CD8-positive, alpha-beta memory T cell (primary cell): ENCODE measurements at regions of chr3 and their contacts with region 1.

Region 1: GRCh38 chr3:100316641-100317069 is 17.9 kb upstream of the NIT2 start:
- DNase-seq: peak in 4 of 5 donors; percentile 24 to 55 (median 42)
- H3K4me3 ChIP-seq: no peak overlapping the region
- H3K4me3 Mint-ChIP-seq: peak overlapping the region in 5 of 7 donors; percentile 18 to 72 (median 47)
- H3K27ac ChIP-seq: no peak overlapping the region
- H3K27ac Mint-ChIP-seq: peak overlapping the region in 4 of 8 donors; percentile 24 to 85 (median 55)
- H3K4me1 ChIP-seq: peaks cover 4% of the 10 kb centered on the region
- H3K4me1 Mint-ChIP-seq: peaks cover 11 to 19% (median 18%) of the 10 kb centered on the region in 3 donors
- H3K27me3 ChIP-seq: no peaks in the 10 kb centered on the region
- H3K27me3 Mint-ChIP-seq: no peaks in the 10 kb centered on the region

Region 2: DNA sequence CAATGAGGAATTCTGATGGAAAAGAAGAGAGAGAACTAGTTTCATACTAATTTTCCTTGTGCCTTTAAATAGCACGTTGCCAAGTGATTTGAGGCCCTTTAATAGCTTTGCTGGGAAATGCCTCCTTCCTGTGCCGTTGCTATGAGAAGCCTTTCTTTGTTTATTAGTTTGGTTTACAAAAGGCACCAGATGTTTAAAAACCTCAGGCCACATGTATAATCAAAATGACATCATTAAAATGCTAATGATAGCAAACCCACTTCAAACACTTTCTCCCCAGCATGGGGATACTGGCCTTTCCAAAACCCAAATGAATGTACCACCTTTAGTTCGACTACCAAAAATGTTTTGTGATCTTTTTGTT is 105.9 kb before region 1 on chr3:
- CTCF ChIA-PET with region 1: no interaction called
- POLR2A ChIA-PET with region 1: no interaction called
- DNase-seq: peak in 2 of 5 donors; percentile 10 to 51
- H3K4me3 ChIP-seq: peak overlapping the region; percentile 40
- H3K4me3 Mint-ChIP-seq: peak overlapping the region in 6 of 7 donors; percentile 52 to 80 (median 65)
- H3K27ac ChIP-seq: no peak overlapping the region
- H3K27ac Mint-ChIP-seq: peak overlapping the region in 7 of 8 donors; percentile 67 to 97 (median 77)
- H3K4me1 ChIP-seq: peaks cover 13% of the 10 kb centered on the region
- H3K4me1 Mint-ChIP-seq: peaks cover 18 to 31% (median 21%) of the 10 kb centered on the region in 3 donors
- H3K27me3 ChIP-seq: no peaks in the 10 kb centered on the region
- H3K27me3 Mint-ChIP-seq: peaks cover 3 to 5% of the 10 kb centered on the region in 2 donors

Region 3: GRCh38 chr3:100245927-100246326 is 70.7 kb before region 1 on chr3:
- CTCF ChIA-PET with region 1: no interaction called
- POLR2A ChIA-PET with region 1: no interaction called
- DNase-seq: no peak
- H3K4me3 ChIP-seq: no peak overlapping the region
- H3K4me3 Mint-ChIP-seq: no peak overlapping the region
- H3K27ac ChIP-seq: no peak overlapping the region
- H3K27ac Mint-ChIP-seq: no peak overlapping the region
- H3K4me1 ChIP-seq: no peaks in the 10 kb centered on the region
- H3K4me1 Mint-ChIP-seq: no peaks in the 10 kb centered on the region
- H3K27me3 ChIP-seq: no peaks in the 10 kb centered on the region
- H3K27me3 Mint-ChIP-seq: peaks cover 5 to 8% of the 10 kb centered on the region in 2 donors

Region 4: GRCh38 chr3:100492059-100493006 is 175.7 kb after region 1 on chr3 and contains the start of gene TMEM45A:
- CTCF ChIA-PET with region 1: no interaction called
- POLR2A ChIA-PET with region 1: no interaction called
- DNase-seq: peak; percentile 53 to 81 (median 70)
- H3K4me3 ChIP-seq: peak within 1 kb of the TSS; percentile 61
- H3K4me3 Mint-ChIP-seq: peak within 1 kb of the TSS; percentile 84 to 94 (median 86)
- H3K27ac ChIP-seq: no peak within 1 kb of the TSS
- H3K27ac Mint-ChIP-seq: peak within 1 kb of the TSS in 5 of 8 donors; percentile 64 to 94 (median 76)
- H3K4me1 ChIP-seq: peaks cover 11% of the 10 kb centered on the region
- H3K4me1 Mint-ChIP-seq: peaks cover 12 to 16% (median 13%) of the 10 kb centered on the region in 3 donors
- H3K27me3 ChIP-seq: peaks cover 5% of the 10 kb centered on the region
- H3K27me3 Mint-ChIP-seq: peaks cover 16 to 21% of the 10 kb centered on the region in 2 donors
- total RNA-seq, gene TMEM45A: 0.44 to 0.50 TPM

Region 5: GRCh38 chr3:100525753-100526612 is 209.3 kb after region 1 on chr3:
- CTCF ChIA-PET with region 1: no interaction called
- POLR2A ChIA-PET with region 1: no interaction called
- DNase-seq: no peak
- H3K4me3 ChIP-seq: no peak overlapping the region
- H3K4me3 Mint-ChIP-seq: no peak overlapping the region
- H3K27ac ChIP-seq: no peak overlapping the region
- H3K27ac Mint-ChIP-seq: no peak overlapping the region
- H3K4me1 ChIP-seq: no peaks in the 10 kb centered on the region
- H3K4me1 Mint-ChIP-seq: no peaks in the 10 kb centered on the region
- H3K27me3 ChIP-seq: no peaks in the 10 kb centered on the region
- H3K27me3 Mint-ChIP-seq: peaks cover 6 to 16% of the 10 kb centered on the region in 2 donors

Region 6: GRCh38 chr3:100590114-100590839 is 273.6 kb after region 1 on chr3:
- CTCF ChIA-PET with region 1: interaction called, 11 read pairs
- POLR2A ChIA-PET with region 1: no interaction called
- DNase-seq: peak; percentile 23 to 64 (median 48)
- H3K4me3 ChIP-seq: no peak overlapping the region
- H3K4me3 Mint-ChIP-seq: peak overlapping the region in 5 of 7 donors; percentile 0 to 49 (median 14)
- H3K27ac ChIP-seq: no peak overlapping the region
- H3K27ac Mint-ChIP-seq: peak overlapping the region in 1 of 8 donors; percentile 42
- H3K4me1 ChIP-seq: peaks cover 3% of the 10 kb centered on the region
- H3K4me1 Mint-ChIP-seq: peaks cover 3 to 6% (median 3%) of the 10 kb centered on the region in 3 donors
- H3K27me3 ChIP-seq: no peaks in the 10 kb centered on the region
- H3K27me3 Mint-ChIP-seq: no peaks in the 10 kb centered on the region